ENCODE measurements at regions of chr5 and their contacts with region 1.

Region 1: GRCh38 chr5:142548739-142549275 is 137.1 kb downstream of the FGF1 start:
- DNase-seq: peak; percentile 73 to 78
- H3K4me3 ChIP-seq: no peak overlapping the region
- H3K27ac ChIP-seq: no peak overlapping the region
- H3K4me1 ChIP-seq: peaks cover 0 to 8% (median 5%) of the 10 kb centered on the region in 4 experiments; a peak in 6 of 7 replicates
- H3K27me3 ChIP-seq: no peaks in the 10 kb centered on the region
- CTCF ChIP-seq: peak; percentile 31 to 98 (median 94)
- EP300 ChIP-seq: peak in 1 of 2 experiments; percentile 30; a peak in 1 of 3 replicates
- POLR2A ChIP-seq: no peak
- RAD21 ChIP-seq: peak; percentile 99

Region 2: DNA sequence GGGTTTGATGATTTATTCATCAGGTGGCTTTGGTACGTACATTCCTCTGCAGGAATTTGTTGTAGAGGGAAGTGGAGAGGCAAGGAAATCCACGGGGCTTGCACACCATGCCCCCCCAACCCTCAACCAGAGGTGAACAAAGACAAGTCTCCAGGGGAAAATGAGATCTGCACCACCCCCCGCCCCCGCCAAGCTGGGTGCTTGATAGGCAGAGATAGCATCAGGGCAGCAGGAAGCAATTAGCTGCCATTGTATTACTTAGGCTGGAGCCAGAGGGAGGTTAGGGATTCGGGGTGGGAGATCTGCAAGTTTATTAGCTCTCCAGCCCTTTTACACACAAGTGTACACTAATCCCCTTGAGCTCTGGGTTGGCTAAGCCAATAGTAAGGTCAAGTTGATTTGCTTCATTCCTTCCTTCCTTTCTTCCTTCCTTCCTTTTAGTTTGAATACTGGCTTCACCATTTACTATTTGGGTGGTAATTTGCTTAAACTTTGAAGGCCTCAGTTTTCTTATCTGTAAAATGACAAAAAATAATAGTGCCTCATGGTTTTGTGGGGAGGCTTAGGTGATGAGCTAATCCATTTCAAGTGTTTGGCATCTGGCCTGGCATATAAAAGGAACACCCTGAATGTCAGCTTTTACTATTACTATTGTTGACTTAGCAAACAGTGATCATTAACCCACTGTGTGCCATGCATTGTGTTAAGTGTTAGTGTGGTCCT is 258.1 kb before region 1 on chr5:
- CTCF ChIA-PET with region 1: interaction called, 12 read pairs
- POLR2A ChIA-PET with region 1: no interaction called
- DNase-seq: no peak
- H3K4me3 ChIP-seq: no peak overlapping the region
- H3K27ac ChIP-seq: no peak overlapping the region
- H3K4me1 ChIP-seq: peaks cover 5 to 23% (median 13%) of the 10 kb centered on the region in 4 experiments
- H3K27me3 ChIP-seq: no peaks in the 10 kb centered on the region
- CTCF ChIP-seq: no peak
- EP300 ChIP-seq: no peak
- POLR2A ChIP-seq: no peak
- RAD21 ChIP-seq: no peak

Region 3: DNA sequence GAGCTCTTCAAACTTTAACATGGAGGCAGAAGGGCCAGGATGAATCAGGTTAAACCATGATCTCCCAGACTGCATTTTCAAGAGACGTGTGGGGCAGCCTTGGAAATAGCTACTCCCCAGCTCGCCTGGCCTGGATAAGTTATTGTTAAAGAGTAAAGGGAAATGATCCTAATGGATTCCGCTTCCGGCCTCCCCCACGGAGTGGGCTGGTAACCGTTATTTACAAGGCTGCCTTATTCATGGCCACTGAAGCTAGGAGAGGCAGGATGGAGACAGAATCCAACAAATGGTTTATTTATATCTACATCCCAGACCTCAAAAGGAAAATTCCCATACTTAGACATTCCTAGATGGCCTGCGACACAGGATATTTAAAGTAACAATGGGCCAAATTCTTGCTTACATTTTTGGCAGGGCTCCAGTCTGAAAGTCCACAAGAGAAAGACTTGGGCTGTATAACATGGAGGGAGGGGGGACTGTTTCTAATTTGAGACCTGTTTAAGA is 251.8 kb before region 1 on chr5:
- CTCF ChIA-PET with region 1: interaction called, 10 read pairs
- POLR2A ChIA-PET with region 1: no interaction called
- DNase-seq: no peak
- H3K4me3 ChIP-seq: no peak overlapping the region
- H3K27ac ChIP-seq: no peak overlapping the region
- H3K4me1 ChIP-seq: peaks cover 8 to 17% (median 13%) of the 10 kb centered on the region in 4 experiments
- H3K27me3 ChIP-seq: no peaks in the 10 kb centered on the region
- CTCF ChIP-seq: no peak
- EP300 ChIP-seq: no peak
- POLR2A ChIP-seq: no peak
- RAD21 ChIP-seq: no peak

Region 4: DNA sequence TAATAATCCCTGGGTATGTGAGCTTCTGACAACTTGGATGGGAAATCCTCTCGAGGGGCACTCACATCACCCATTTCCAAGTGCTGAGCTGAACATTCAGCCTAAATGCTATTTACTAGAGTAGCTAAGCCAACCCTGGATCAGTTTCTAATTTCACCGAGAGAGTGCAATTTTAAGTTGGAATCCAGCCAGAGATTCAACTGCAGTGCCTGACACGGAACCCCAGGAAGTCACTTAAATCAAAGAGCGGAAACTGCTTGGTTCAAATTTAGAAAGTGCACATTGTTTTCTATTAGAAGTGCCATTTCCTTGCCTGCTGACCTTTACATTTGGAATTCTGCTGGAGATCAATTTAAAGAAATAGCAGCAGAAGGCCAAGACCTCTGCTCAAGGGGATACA is 232.8 kb before region 1 on chr5:
- CTCF ChIA-PET with region 1: interaction called, 191 read pairs
- POLR2A ChIA-PET with region 1: no interaction called
- DNase-seq: no peak
- H3K4me3 ChIP-seq: no peak overlapping the region
- H3K27ac ChIP-seq: no peak overlapping the region
- H3K4me1 ChIP-seq: peaks cover 13 to 43% (median 20%) of the 10 kb centered on the region in 4 experiments
- H3K27me3 ChIP-seq: no peaks in the 10 kb centered on the region
- CTCF ChIP-seq: no peak
- EP300 ChIP-seq: no peak
- POLR2A ChIP-seq: no peak
- RAD21 ChIP-seq: no peak

Region 5: GRCh38 chr5:142356716-142357473 is 191.9 kb before region 1 on chr5:
- CTCF ChIA-PET with region 1: interaction called, 18 read pairs
- POLR2A ChIA-PET with region 1: interaction called, 5 read pairs
- DNase-seq: peak; percentile 87 to 89
- H3K4me3 ChIP-seq: peak overlapping the region; percentile 37 to 65 (median 52)
- H3K27ac ChIP-seq: peak overlapping the region; percentile 77; the same call in 1 of the 2 replicates
- H3K4me1 ChIP-seq: peaks cover 11 to 24% (median 20%) of the 10 kb centered on the region in 4 experiments
- H3K27me3 ChIP-seq: no peaks in the 10 kb centered on the region; a peak in 1 of 7 replicates
- CTCF ChIP-seq: no peak
- EP300 ChIP-seq: peak in 1 of 2 experiments; percentile 10; a peak in 1 of 3 replicates
- POLR2A ChIP-seq: peak in 1 of 2 experiments; percentile 53; a peak in 1 of 3 replicates
- RAD21 ChIP-seq: peak; percentile 14 to 24; a peak in 3 of 4 replicates

Region 6: GRCh38 chr5:142522988-142523387 is 25.8 kb before region 1 on chr5:
- CTCF ChIA-PET with region 1: no interaction called
- POLR2A ChIA-PET with region 1: no interaction called
- DNase-seq: no peak
- H3K4me3 ChIP-seq: no peak overlapping the region
- H3K27ac ChIP-seq: no peak overlapping the region
- H3K4me1 ChIP-seq: peaks cover 0 to 6% (median 2%) of the 10 kb centered on the region in 4 experiments; a peak in 2 of 7 replicates
- H3K27me3 ChIP-seq: no peaks in the 10 kb centered on the region
- CTCF ChIP-seq: no peak
- EP300 ChIP-seq: no peak
- POLR2A ChIP-seq: no peak
- RAD21 ChIP-seq: no peak

Region 7: GRCh38 chr5:143161893-143162540 is 613.2 kb after region 1 on chr5:
- CTCF ChIA-PET with region 1: no interaction called
- POLR2A ChIA-PET with region 1: no interaction called
- DNase-seq: no peak
- H3K4me3 ChIP-seq: no peak overlapping the region
- H3K27ac ChIP-seq: no peak overlapping the region
- H3K4me1 ChIP-seq: no peaks in the 10 kb centered on the region
- H3K27me3 ChIP-seq: no peaks in the 10 kb centered on the region
- CTCF ChIP-seq: no peak
- EP300 ChIP-seq: no peak
- POLR2A ChIP-seq: no peak
- RAD21 ChIP-seq: no peak